ENCODE measurements at regions of chr13 and their contacts with region 1.

Region 1: GRCh38 chr13:20174656-20175405 is 14.0 kb upstream of the GJA3 start:
- DNase-seq: peak; percentile 99
- ATAC-seq: peak; percentile 94
- H3K4me3 ChIP-seq: no peak overlapping the region
- H3K27ac ChIP-seq: peak overlapping the region; percentile 83
- H3K4me1 ChIP-seq: peaks cover 14% of the 10 kb centered on the region; the same call in 1 of the 2 replicates
- H3K27me3 ChIP-seq: peaks cover 6% of the 10 kb centered on the region
- CTCF ChIP-seq: no peak
- POLR2A ChIP-seq: peak; percentile 70
- RAD21 ChIP-seq: no peak

Region 2: DNA sequence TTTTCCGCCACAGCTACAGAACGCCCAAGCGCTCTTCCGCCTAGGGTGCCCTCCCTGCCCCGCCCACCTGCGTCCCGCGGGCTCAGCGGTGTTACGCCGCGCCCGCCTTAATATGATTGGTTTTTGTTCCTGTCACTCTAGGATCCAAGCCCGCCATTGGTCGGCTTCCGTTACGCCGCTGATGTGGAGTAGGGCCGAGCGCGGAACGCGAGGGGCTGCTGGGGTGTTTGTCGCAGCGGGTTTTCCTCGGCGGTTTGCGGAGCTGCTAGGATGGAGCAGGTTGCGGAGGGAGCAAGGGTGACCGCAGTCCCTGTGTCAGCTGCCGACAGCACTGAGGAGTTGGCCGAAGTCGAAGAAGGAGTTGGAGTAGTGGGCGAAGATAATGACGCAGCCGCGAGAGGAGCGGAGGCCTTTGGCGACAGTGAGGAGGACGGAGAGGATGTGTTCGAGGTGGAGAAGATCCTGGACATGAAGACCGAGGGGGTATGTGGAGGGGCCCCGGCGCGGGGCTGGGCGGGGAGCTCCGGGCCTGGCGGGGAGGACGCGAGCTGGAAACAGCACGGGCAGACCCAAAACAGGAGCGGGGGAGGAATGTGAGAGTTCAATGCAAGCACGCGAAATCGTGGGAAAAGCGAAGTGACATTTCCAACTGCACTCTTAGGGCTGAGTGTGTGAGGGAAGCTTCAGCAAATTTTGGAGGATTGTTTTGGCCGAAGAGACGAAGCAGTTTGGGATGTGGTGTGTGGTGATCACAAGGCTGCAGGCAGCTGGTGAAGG is 541.2 kb before region 1 on chr13 and contains the start of gene MPHOSPH8:
- CTCF ChIA-PET with region 1: no interaction called
- POLR2A ChIA-PET with region 1: no interaction called
- dilution Hi-C with region 1: no loop called
- in situ Hi-C with region 1: loop called (anchors 25 kb)
- intact Hi-C with region 1: no loop called
- DNase-seq: peak; percentile 94
- ATAC-seq: peak; percentile 97
- H3K4me3 ChIP-seq: peak within 1 kb of the TSS; percentile 88
- H3K27ac ChIP-seq: peak within 1 kb of the TSS; percentile 79
- H3K4me1 ChIP-seq: no peaks in the 10 kb centered on the region; the same call in none of the 2 replicates
- H3K27me3 ChIP-seq: no peaks in the 10 kb centered on the region
- CTCF ChIP-seq: no peak
- POLR2A ChIP-seq: no peak
- RAD21 ChIP-seq: no peak; the same call in 1 of the 2 replicates
- total RNA-seq, gene MPHOSPH8: 11.7 and 13.3 TPM in 2 replicates

Region 3: DNA sequence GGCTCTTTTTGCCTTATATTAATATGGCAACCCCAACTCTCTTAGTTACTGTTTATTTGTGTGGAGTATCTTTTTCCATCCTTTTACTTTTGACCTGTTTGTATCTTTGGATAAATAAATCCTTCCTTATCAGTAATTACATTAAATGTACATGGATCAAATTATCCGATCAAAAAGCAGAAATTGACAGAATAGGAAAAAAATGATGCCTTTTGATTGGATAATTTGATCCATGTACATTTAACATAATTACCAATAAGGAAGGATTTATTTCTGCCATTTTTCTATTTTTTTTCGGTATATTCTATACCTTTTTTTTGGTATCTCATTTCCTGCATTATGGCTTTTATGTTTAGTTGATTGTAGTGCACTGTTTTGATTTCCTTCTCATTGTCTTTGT is 159.1 kb before region 1 on chr13:
- CTCF ChIA-PET with region 1: no interaction called
- POLR2A ChIA-PET with region 1: no interaction called
- dilution Hi-C with region 1: no loop called
- in situ Hi-C with region 1: no loop called
- intact Hi-C with region 1: no loop called
- DNase-seq: no peak
- ATAC-seq: no peak
- H3K4me3 ChIP-seq: no peak overlapping the region
- H3K27ac ChIP-seq: no peak overlapping the region
- H3K4me1 ChIP-seq: no peaks in the 10 kb centered on the region
- H3K27me3 ChIP-seq: no peaks in the 10 kb centered on the region
- CTCF ChIP-seq: no peak
- POLR2A ChIP-seq: no peak
- RAD21 ChIP-seq: no peak